ENCODE measurements at regions of chr9 and their contacts with region 1.

Region 1: GRCh38 chr9:126398403-126399058 is 71.9 kb downstream of the MVB12B start:
- DNase-seq: no peak
- H3K4me3 ChIP-seq: no peak overlapping the region
- H3K27ac ChIP-seq: peak overlapping the region in 1 of 4 donors; percentile 35
- H3K4me1 ChIP-seq: peaks cover 14 to 52% (median 20%) of the 10 kb centered on the region in 3 donors
- H3K27me3 ChIP-seq: no peaks in the 10 kb centered on the region
- CTCF ChIP-seq: peak; percentile 89 to 97 (median 96)
- POLR2A ChIP-seq: no peak

Region 2: GRCh38 chr9:126228781-126229444 is 169.6 kb before region 1 on chr9:
- intact Hi-C with region 1: no loop called
- DNase-seq: no peak
- H3K4me3 ChIP-seq: no peak overlapping the region
- H3K27ac ChIP-seq: no peak overlapping the region
- H3K4me1 ChIP-seq: peaks cover 0 to 4% (median 0%) of the 10 kb centered on the region in 3 donors
- H3K27me3 ChIP-seq: peaks cover 0 to 65% (median 0%) of the 10 kb centered on the region in 4 donors
- CTCF ChIP-seq: peak; percentile 73 to 92 (median 88)
- POLR2A ChIP-seq: no peak

Region 3: DNA sequence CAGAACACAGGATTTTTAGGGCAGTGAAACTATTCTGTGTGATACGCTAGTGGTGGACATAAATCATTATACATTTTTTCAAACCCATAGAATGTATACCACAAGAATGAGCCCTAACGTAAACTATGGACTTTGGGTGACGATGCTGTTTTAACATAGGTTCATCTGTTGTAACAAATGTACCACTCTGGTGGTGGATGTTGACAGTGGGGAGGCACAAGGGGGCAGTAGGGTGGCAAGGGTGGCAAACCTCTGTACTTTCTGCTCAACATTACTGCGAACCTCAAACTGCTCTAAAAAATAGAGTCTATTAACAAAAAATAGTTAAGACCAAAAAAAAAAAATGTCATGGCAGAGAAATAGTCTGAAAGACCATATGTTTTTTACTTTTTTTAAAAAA is 81.0 kb before region 1 on chr9:
- intact Hi-C with region 1: loop called (anchors 5 kb)
- DNase-seq: no peak
- H3K4me3 ChIP-seq: no peak overlapping the region
- H3K27ac ChIP-seq: no peak overlapping the region
- H3K4me1 ChIP-seq: no peaks in the 10 kb centered on the region
- H3K27me3 ChIP-seq: no peaks in the 10 kb centered on the region
- CTCF ChIP-seq: peak in 5 of 6 experiments; percentile 36 to 49 (median 48)
- POLR2A ChIP-seq: no peak